GM10248 (cell line): ENCODE measurements at regions of chr3 and their contacts with region 1.

Region 1: GRCh38 chr3:16410659-16411058 is 102.8 kb downstream of the RFTN1 start:
- DNase-seq: no peak
- CTCF ChIP-seq: no peak

Region 2: GRCh38 chr3:16388850-16389441 is 21.7 kb before region 1 on chr3:
- CTCF ChIA-PET with region 1: interaction called, 14 read pairs
- POLR2A ChIA-PET with region 1: no interaction called
- DNase-seq: no peak
- CTCF ChIP-seq: no peak

Region 3: DNA sequence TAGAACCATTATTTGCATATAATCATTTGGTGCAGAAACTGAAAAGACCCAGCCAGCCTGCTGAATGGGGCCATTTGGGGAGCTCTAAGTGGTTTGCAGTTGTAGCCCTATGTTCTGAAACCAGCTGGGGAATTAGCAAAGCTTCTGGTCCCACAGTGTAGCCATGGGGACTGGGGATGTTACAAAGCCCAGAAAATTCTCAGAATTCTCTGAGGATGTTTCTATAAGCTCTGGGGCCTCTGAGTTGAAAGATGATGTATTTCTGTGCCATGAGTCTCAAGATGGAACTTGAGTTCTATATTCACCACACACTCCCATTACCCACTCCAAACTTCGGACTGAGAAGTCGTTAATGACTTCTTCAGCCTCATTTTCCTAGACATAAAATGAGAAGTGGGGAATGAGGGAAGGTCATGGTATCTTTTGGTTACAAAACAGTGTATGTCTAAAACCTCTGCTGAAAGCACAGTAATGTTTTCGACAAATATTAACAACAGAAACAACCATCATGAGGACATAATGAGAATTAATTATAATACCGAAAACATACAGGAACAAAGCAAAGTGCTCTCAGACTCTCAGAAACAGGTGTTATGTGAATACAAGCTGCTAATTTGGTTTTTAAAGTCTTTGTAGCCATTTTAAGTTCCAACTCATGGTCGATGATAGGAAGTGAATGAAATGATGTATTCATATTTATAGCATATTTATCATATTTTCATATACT is 13.5 kb after region 1 on chr3:
- CTCF ChIA-PET with region 1: interaction called, 10 read pairs
- POLR2A ChIA-PET with region 1: interaction called, 4 read pairs
- DNase-seq: no peak
- CTCF ChIP-seq: no peak